ENCODE measurements at regions of chr2 and their contacts with region 1.

Region 1: GRCh38 chr2:25878361-25879132 is at the start of gene ASXL2:
- DNase-seq: peak; percentile 98 to 99
- ATAC-seq: peak; percentile 90 to 97 (median 90)
- H3K4me3 ChIP-seq: peak within 1 kb of the TSS; percentile 98
- H3K4me3 Mint-ChIP-seq: peak within 1 kb of the TSS; percentile 97
- H3K27ac ChIP-seq: peak within 1 kb of the TSS; percentile 93
- H3K27ac Mint-ChIP-seq: peak within 1 kb of the TSS; percentile 95 to 98
- H3K4me1 ChIP-seq: peaks cover 9% of the 10 kb centered on the region
- H3K4me1 Mint-ChIP-seq: peaks cover 33 to 41% of the 10 kb centered on the region in 2 donors
- H3K27me3 ChIP-seq: no peaks in the 10 kb centered on the region
- H3K27me3 Mint-ChIP-seq: peaks cover 0 to 6% of the 10 kb centered on the region in 2 donors
- CTCF ChIP-seq: no peak
- total RNA-seq, gene ASXL2: 27.7 to 32.6 (median 27.8) TPM

Region 2: DNA sequence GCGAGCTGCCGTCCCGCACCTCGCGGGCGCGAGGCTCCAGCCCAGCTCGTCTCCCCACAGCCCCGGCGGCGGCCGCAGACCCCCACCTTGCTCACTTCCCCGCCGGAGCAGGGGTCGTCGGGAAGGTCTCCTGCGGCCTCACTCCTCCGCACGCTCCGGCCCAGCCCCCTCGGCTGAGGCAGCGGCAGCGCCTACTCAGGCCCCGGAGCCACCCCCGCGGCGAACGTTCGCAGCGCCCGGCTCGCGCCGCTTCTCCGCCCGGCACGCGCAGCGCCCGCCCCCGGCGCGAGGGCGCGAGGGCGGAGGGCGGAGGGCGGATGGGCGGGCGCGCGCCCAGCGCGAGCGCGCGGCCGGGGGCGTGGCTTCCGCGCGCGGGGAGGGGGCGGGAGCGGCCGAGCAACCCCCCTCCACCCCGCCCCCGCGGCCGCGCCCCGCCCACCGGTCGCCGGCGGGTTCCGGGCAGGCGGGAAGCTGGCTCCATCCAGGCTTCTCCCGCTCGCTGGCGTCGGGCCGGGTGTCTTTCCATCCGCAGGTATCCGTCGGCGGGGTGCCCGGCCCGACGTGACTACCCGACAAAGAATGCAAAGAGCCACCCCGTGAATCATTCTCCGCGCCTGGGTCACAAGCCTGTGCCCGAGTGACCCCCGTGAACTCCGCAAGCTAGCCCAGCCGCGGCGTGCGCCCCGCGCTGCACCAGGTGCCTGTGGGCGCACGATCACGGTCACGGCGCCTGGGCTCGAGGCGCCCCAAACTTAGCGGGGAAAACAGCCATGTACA is 205.1 kb before region 1 on chr2 and contains the start of gene DTNB:
- intact Hi-C with region 1: loop called (anchors 2 kb)
- DNase-seq: peak; percentile 77 to 91
- ATAC-seq: peak; percentile 79 to 92 (median 80)
- H3K4me3 ChIP-seq: peak within 1 kb of the TSS; percentile 64
- H3K4me3 Mint-ChIP-seq: peak within 1 kb of the TSS; percentile 88
- H3K27ac ChIP-seq: peak within 1 kb of the TSS; percentile 49
- H3K27ac Mint-ChIP-seq: peak within 1 kb of the TSS; percentile 47 to 77
- H3K4me1 ChIP-seq: peaks cover 17% of the 10 kb centered on the region
- H3K4me1 Mint-ChIP-seq: peaks cover 14 to 19% of the 10 kb centered on the region in 2 donors
- H3K27me3 ChIP-seq: no peaks in the 10 kb centered on the region
- H3K27me3 Mint-ChIP-seq: no peaks in the 10 kb centered on the region
- CTCF ChIP-seq: no peak
- total RNA-seq, gene DTNB: 20.8 to 33.7 (median 23.6) TPM

Region 3: GRCh38 chr2:25851740-25852503 is 26.6 kb before region 1 on chr2:
- intact Hi-C with region 1: loop called (anchors 2 kb)
- DNase-seq: peak in 1 of 2 donors; percentile 84
- ATAC-seq: peak; percentile 98 to 100 (median 99)
- H3K4me3 ChIP-seq: no peak overlapping the region
- H3K4me3 Mint-ChIP-seq: peak overlapping the region; percentile 76
- H3K27ac ChIP-seq: peak overlapping the region; percentile 19
- H3K27ac Mint-ChIP-seq: peak overlapping the region; percentile 27 to 84
- H3K4me1 ChIP-seq: peaks cover 5% of the 10 kb centered on the region
- H3K4me1 Mint-ChIP-seq: peaks cover 29 to 47% of the 10 kb centered on the region in 2 donors
- H3K27me3 ChIP-seq: no peaks in the 10 kb centered on the region
- H3K27me3 Mint-ChIP-seq: no peaks in the 10 kb centered on the region
- CTCF ChIP-seq: peak; percentile 70

Region 4: DNA sequence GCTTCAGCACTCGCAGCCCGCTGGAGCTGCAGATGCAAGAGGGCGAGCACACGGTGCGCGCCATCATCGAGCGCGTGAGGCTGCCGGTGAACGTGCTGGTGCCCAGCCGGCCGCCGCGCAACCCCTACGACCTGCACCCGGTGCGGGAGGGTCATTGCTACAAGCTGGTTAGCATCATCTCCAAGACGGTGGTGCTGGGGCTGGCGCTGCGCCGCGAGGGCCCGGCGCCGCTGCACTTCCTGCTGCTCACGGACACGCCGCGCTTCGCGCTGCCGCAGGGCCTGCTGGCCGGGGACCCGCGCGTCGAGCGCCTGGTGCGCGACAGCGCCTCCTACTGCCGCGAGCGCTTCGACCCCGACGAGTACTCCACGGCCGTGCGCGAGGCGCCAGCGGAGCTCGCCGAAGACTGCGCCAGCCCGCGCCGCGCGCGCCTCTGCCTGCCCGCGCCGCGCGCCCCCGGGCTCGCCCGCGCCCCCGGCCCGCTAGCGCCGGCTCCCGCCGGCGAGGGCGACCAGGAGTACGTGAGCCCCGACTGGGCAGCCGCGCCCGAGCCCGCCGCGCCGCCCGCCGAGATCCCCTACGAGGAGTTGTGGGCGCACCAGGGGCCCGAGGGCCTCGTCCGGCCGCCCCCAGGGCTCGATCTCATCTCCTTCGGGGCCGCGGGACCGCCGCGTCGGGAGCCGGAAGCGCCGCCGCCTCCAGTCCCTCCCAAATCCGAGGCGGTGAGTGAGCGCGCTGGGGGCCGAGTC is 306.2 kb after region 1 on chr2:
- intact Hi-C with region 1: loop called (anchors 10 kb)
- DNase-seq: peak; percentile 85 to 96
- ATAC-seq: peak; percentile 97 to 98 (median 98)
- H3K4me3 ChIP-seq: peak overlapping the region; percentile 51
- H3K4me3 Mint-ChIP-seq: peak overlapping the region; percentile 82
- H3K27ac ChIP-seq: peak overlapping the region; percentile 42
- H3K27ac Mint-ChIP-seq: peak overlapping the region in 1 of 2 donors; percentile 75
- H3K4me1 ChIP-seq: peaks cover 16% of the 10 kb centered on the region
- H3K4me1 Mint-ChIP-seq: peaks cover 6 to 19% of the 10 kb centered on the region in 2 donors
- H3K27me3 ChIP-seq: no peaks in the 10 kb centered on the region
- H3K27me3 Mint-ChIP-seq: peaks cover 14 to 18% of the 10 kb centered on the region in 2 donors
- CTCF ChIP-seq: peak; percentile 61

Measured in natural killer cell (primary cell).